H1 (cell line): ENCODE measurements at regions of chr5 and their contacts with region 1.

Region 1: GRCh38 chr5:34998058-34998789 is 49.5 kb downstream of the AGXT2 start:
- DNase-seq: no peak
- H3K4me3 ChIP-seq: no peak overlapping the region
- H3K27ac ChIP-seq: no peak overlapping the region
- H3K4me1 ChIP-seq: no peaks in the 10 kb centered on the region
- H3K27me3 ChIP-seq: no peaks in the 10 kb centered on the region
- CTCF ChIP-seq: no peak
- EP300 ChIP-seq: no peak
- POLR2A ChIP-seq: no peak
- RAD21 ChIP-seq: no peak

Region 2: DNA sequence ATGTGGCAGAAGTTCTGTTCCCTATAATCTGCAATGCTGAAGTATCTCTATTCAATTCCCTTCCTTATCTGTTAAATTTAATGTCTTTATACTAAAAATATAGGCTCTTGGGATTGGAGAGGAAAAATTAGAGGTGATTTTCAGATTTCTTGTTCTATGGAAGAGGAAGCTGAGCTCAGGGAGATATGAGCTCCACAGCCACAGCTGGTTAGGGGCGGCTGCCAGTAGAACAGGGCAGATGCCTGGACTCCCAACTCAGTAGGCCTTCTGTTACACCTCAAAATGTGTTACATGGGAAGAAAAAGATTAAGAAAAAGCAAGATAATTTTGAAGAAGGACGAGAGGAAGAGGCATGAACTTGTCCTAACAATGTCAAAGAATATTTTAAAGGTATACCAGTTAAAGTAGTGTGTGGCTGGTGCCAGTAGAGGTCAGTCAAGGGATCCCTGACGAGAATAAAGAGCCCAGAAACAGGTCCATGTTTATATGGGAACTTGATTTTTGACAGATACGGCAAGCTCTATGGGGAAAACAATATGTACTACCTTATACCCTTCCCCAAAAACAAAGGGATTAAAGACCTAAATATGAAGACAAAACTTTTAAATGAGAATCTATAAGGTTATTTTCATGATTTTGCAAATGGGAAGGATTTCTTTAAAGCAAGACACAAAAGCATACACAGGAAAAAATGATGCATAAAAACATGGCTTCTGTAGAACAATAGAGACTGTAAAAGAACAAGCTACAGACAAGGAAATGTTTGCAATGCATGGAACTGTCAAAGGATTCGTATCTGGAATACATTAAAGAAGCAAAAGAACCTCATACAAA is 40.1 kb before region 1 on chr5:
- CTCF ChIA-PET with region 1: interaction called, 69 read pairs
- POLR2A ChIA-PET with region 1: no interaction called
- DNase-seq: no peak
- H3K4me3 ChIP-seq: no peak overlapping the region
- H3K27ac ChIP-seq: no peak overlapping the region
- H3K4me1 ChIP-seq: no peaks in the 10 kb centered on the region
- H3K27me3 ChIP-seq: no peaks in the 10 kb centered on the region
- CTCF ChIP-seq: peak in 2 of 3 experiments; percentile 51 to 70; a peak in 3 of 4 replicates
- EP300 ChIP-seq: no peak
- POLR2A ChIP-seq: no peak
- RAD21 ChIP-seq: peak; percentile 63 to 64